ENCODE measurements at regions of chr5 and their contacts with region 1.

Region 1: DNA sequence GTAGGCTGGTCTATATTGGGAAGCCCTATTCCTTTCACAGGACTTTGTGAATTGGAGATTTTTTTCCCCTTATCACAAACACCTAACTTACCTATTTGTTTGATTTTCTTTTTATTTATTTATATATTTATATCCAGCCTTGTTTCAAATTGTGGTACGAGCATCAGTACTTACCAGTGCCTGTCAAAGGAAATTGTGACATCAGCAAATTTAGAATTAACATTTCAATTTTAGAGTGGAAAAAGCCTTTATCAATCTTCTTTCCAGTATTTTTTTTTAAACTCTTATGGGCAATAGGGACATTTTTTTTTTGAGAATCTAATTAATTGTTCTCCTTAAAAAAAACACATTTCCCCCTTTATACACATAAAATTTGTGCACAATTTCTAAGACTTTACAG is 790.2 kb downstream of the PRELID2 start:
- DNase-seq: no peak
- H3K4me3 ChIP-seq: no peak overlapping the region
- H3K27ac ChIP-seq: no peak overlapping the region
- H3K4me1 ChIP-seq: no peaks in the 10 kb centered on the region
- H3K27me3 ChIP-seq: no peaks in the 10 kb centered on the region
- CTCF ChIP-seq: no peak
- EP300 ChIP-seq: no peak
- POLR2A ChIP-seq: no peak
- RAD21 ChIP-seq: no peak

Region 2: DNA sequence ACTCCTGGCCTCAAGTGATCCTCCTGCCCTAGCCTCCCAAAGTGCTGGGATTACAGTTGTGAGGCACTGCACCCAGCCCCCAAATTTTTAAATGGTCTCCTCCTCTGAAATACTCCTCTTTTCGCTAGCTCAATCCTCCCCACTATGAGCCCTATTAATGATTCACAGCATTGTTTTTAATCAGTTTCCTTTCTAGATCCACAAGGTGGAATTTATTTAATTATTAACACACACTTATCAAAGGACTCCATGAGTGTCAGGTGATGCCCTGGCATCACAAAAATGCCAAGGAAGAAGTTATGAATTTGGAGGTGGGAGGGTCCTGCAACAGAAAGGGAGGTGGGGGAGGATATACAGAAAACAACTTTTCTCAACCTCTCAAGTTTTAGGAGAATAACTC is 16.3 kb before region 1 on chr5:
- CTCF ChIA-PET with region 1: interaction called, 10 read pairs
- POLR2A ChIA-PET with region 1: no interaction called
- DNase-seq: no peak
- H3K4me3 ChIP-seq: no peak overlapping the region
- H3K27ac ChIP-seq: no peak overlapping the region
- H3K4me1 ChIP-seq: peaks cover 0 to 3% (median 0%) of the 10 kb centered on the region in 4 experiments; a peak in 1 of 7 replicates
- H3K27me3 ChIP-seq: no peaks in the 10 kb centered on the region
- CTCF ChIP-seq: no peak
- EP300 ChIP-seq: no peak
- POLR2A ChIP-seq: no peak
- RAD21 ChIP-seq: no peak

Measured in H1 (cell line).